ENCODE measurements at regions of chr2 and their contacts with region 1.

Region 1: DNA sequence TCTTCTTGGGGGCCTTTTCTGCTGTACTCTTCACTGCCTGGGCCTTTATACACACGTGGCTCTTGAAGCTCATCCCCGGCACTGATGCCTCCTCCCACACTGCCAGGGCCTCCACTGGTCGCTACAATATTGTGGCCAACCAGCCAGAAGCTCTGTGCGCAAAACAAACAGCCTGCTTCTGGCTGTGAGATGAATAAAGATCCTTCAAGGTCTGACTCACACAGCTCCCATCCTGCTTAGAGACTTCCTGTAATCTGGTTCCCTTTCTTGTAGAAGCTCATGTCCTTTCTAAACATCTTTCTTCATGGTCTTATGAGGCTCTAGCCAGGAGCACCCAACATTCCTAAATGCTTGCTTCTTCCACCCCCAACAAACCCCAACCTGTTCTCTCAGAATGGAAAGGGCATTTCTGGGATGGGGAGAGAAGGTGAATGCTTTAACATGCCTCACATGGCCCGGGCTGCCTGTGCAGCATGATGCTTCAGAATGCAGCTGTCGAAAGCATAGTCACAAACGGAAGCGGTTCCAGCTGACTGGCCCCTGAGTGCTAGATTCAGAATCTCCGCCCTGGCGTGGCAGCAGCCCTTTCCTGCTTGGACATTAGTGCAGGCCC is 24.6 kb downstream of the NRP2 start:
- DNase-seq: peak in 6 of 9 donors; percentile 17 to 53 (median 20)
- ATAC-seq: peak; percentile 93
- H3K4me3 ChIP-seq: no peak overlapping the region
- H3K4me3 Mint-ChIP-seq: peak overlapping the region in 7 of 10 donors; percentile 2 to 76 (median 23)
- H3K27ac ChIP-seq: no peak overlapping the region
- H3K27ac Mint-ChIP-seq: peak overlapping the region; percentile 71 to 98 (median 90)
- H3K4me1 ChIP-seq: peaks cover 0 to 11% of the 10 kb centered on the region in 2 donors
- H3K4me1 Mint-ChIP-seq: peaks cover 0 to 49% (median 11%) of the 10 kb centered on the region in 7 donors
- H3K27me3 ChIP-seq: no peaks in the 10 kb centered on the region
- H3K27me3 Mint-ChIP-seq: peaks cover 0 to 5% (median 0%) of the 10 kb centered on the region in 5 donors

Region 2: GRCh38 chr2:205688417-205689200 is 18.3 kb before region 1 on chr2:
- CTCF ChIA-PET with region 1: no interaction called
- POLR2A ChIA-PET with region 1: no interaction called
- intact Hi-C with region 1: loop called in 1 of 2 experiments (anchors 2 kb)
- DNase-seq: no peak
- ATAC-seq: no peak
- H3K4me3 ChIP-seq: no peak overlapping the region
- H3K4me3 Mint-ChIP-seq: no peak overlapping the region
- H3K27ac ChIP-seq: no peak overlapping the region
- H3K27ac Mint-ChIP-seq: no peak overlapping the region
- H3K4me1 ChIP-seq: no peaks in the 10 kb centered on the region
- H3K4me1 Mint-ChIP-seq: peaks cover 5 to 32% (median 19%) of the 10 kb centered on the region in 7 donors
- H3K27me3 ChIP-seq: peaks cover 0 to 9% of the 10 kb centered on the region in 2 donors
- H3K27me3 Mint-ChIP-seq: peaks cover 42 to 66% (median 51%) of the 10 kb centered on the region in 5 donors

Measured in naive thymus-derived CD4-positive, alpha-beta T cell (primary cell).